ENCODE measurements at regions of chr1 and their contacts with region 1.

Region 1: DNA sequence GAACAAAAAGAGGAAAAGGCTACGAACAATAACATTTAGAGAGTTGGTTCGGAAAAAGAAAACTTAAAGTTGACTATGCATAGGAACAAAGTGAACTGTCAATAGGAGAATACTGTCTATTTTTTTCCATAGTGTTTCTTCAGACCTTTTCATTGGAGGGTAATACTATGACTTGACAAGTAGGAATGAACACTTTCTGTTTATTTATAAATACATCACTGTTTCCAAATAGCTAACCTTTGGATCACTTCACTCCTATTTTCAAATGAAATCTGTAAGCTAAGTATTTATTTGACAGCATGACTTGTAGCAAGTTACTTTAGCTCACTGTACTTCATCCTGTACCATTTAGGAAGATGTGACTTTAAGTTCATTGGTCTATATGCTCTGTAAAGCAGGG is 221.3 kb downstream of the COL24A1 start:
- DNase-seq: no peak
- H3K4me3 ChIP-seq: no peak overlapping the region
- H3K27ac ChIP-seq: no peak overlapping the region
- H3K4me1 ChIP-seq: no peaks in the 10 kb centered on the region
- H3K27me3 ChIP-seq: no peaks in the 10 kb centered on the region
- CTCF ChIP-seq: no peak
- EP300 ChIP-seq: no peak
- POLR2A ChIP-seq: no peak

Region 2: DNA sequence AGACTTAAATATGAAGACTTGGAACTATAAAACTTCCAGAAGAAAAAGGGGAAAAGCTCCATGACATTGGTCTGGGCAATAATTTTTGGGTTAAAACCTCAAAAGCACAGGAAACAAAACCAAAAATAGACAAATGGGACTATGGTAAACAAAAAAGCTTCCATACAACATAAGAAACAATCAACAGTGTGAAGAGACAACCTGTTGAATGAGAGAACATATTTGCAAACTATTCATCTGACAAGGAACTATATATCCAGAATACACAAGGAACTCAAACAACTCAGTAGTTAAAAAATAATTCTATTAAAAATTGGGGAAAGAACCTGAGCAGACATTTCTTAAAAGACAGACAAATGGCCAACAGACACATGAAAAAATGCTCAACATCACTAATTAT is 34.3 kb before region 1 on chr1:
- in situ Hi-C with region 1: no loop called
- intact Hi-C with region 1: loop called (anchors 5 kb)
- DNase-seq: no peak
- H3K4me3 ChIP-seq: no peak overlapping the region
- H3K27ac ChIP-seq: no peak overlapping the region
- H3K4me1 ChIP-seq: no peaks in the 10 kb centered on the region
- H3K27me3 ChIP-seq: no peaks in the 10 kb centered on the region
- CTCF ChIP-seq: no peak
- EP300 ChIP-seq: no peak
- POLR2A ChIP-seq: no peak

Region 3: DNA sequence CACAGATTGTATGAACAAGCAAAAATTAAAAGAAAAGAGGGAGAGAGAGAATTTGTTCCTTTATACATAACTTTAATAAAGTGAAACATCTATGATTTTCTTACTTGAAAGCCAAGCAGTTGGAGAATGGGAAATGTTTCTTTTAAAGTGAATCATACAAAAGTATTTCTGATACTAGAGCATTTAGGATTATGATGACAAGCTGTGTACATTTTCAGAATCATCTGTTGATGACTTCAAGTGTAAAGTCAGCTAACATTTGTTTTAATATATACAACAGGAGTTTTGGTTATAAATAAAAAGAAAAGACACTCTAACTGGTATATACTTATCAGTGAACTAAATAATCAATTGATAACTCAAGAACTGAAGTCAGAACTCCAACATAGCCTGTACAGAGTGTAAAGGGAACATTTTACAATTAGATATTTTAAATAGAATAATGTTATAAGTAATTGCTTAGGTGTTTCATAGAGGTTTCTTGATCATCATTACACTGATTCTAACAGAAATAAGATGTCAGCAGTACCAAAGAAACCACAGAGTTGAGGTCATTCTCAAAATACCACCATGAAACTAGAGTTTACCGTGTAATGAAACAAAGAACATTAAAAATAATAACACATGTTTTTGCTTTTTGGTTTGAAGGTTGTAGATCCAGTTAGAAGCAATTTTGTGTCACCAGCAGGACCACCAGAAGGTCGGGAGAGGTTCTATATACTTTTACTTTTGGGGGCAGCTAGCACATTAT is 117.9 kb after region 1 on chr1:
- in situ Hi-C with region 1: no loop called
- intact Hi-C with region 1: no loop called
- DNase-seq: no peak
- H3K4me3 ChIP-seq: no peak overlapping the region
- H3K27ac ChIP-seq: no peak overlapping the region
- H3K4me1 ChIP-seq: no peaks in the 10 kb centered on the region
- H3K27me3 ChIP-seq: no peaks in the 10 kb centered on the region
- CTCF ChIP-seq: no peak
- EP300 ChIP-seq: no peak
- POLR2A ChIP-seq: no peak

Measured in transverse colon (tissue), 4 donors.